ENCODE measurements at regions of chr16 and their contacts with region 1.

Region 1: GRCh38 chr16:57167953-57168352 is 17.9 kb downstream of the PSME3IP1 start:
- DNase-seq: peak in 2 of 4 donors; percentile 52 to 72
- ATAC-seq: peak; percentile 90
- H3K4me3 ChIP-seq: no peak overlapping the region
- H3K27ac ChIP-seq: peak overlapping the region; percentile 52 to 77
- H3K4me1 ChIP-seq: peaks cover 10 to 27% of the 10 kb centered on the region in 2 donors
- H3K27me3 ChIP-seq: no peaks in the 10 kb centered on the region
- CTCF ChIP-seq: peak; percentile 39 to 51

Region 2: GRCh38 chr16:56869513-56870275 is 298.3 kb before region 1 on chr16:
- intact Hi-C with region 1: loop called in 1 of 2 experiments (anchors 10 kb)
- DNase-seq: no peak
- ATAC-seq: peak; percentile 76
- H3K4me3 ChIP-seq: no peak overlapping the region
- H3K27ac ChIP-seq: no peak overlapping the region
- H3K4me1 ChIP-seq: peaks cover 0 to 13% of the 10 kb centered on the region in 2 donors
- H3K27me3 ChIP-seq: no peaks in the 10 kb centered on the region
- CTCF ChIP-seq: no peak

Region 3: DNA sequence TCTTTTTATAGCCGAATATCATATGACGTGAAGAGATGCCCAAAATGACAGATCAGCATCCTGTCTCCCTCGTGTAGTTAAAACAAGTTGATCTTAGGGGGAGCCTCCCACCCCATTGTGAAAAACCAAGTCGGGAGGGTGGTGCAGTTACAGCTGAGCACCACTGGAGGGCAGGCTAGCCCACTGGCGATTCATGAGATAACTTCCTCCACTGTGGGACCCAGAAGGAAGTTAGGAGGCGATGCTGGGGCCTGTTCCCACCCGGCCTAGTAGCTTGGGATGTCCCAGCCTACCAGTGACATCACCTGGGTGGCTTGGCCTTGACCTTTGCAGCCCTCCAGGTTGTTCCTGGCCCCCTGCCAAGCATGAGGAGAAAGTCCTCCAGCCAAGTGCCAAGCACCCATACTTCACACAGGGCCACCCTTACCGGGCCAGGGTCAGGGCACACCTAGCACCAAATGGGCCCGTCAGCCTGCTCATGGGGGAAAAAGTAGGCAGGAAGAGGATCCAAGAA is 83.6 kb before region 1 on chr16:
- intact Hi-C with region 1: loop called (anchors 5 kb)
- DNase-seq: peak; percentile 54 to 86 (median 79)
- ATAC-seq: peak; percentile 98
- H3K4me3 ChIP-seq: no peak overlapping the region
- H3K27ac ChIP-seq: peak overlapping the region in 1 of 2 donors; percentile 81
- H3K4me1 ChIP-seq: peaks cover 3 to 20% of the 10 kb centered on the region in 2 donors
- H3K27me3 ChIP-seq: no peaks in the 10 kb centered on the region
- CTCF ChIP-seq: peak; percentile 95 to 98

Region 4: GRCh38 chr16:57089406-57089805 is 78.5 kb before region 1 on chr16:
- intact Hi-C with region 1: loop called (anchors 5 kb)
- DNase-seq: no peak
- ATAC-seq: no peak
- H3K4me3 ChIP-seq: no peak overlapping the region
- H3K27ac ChIP-seq: no peak overlapping the region
- H3K4me1 ChIP-seq: peaks cover 7 to 47% of the 10 kb centered on the region in 2 donors
- H3K27me3 ChIP-seq: no peaks in the 10 kb centered on the region
- CTCF ChIP-seq: no peak

Region 5: GRCh38 chr16:57284208-57284951 is 116.4 kb after region 1 on chr16 and contains the start of gene PLLP:
- intact Hi-C with region 1: no loop called
- DNase-seq: peak in 1 of 4 donors; percentile 87
- ATAC-seq: peak; percentile 89
- H3K4me3 ChIP-seq: peak within 1 kb of the TSS; percentile 39 to 61
- H3K27ac ChIP-seq: peak within 1 kb of the TSS; percentile 65 to 71
- H3K4me1 ChIP-seq: peaks cover 4 to 24% of the 10 kb centered on the region in 2 donors
- H3K27me3 ChIP-seq: peaks cover 7 to 39% of the 10 kb centered on the region in 2 donors
- CTCF ChIP-seq: no peak
- polyA plus RNA-seq, gene PLLP: 3.5 to 7.7 (median 4.6) TPM

Measured in left lung (tissue), 14 donors.